ENCODE measurements at regions of chr18 and their contacts with region 1.

Region 1: GRCh38 chr18:41126541-41127235 is 828.3 kb upstream of the PIK3C3 start:
- DNase-seq: no peak
- ATAC-seq: no peak
- H3K4me3 ChIP-seq: no peak overlapping the region
- H3K4me3 Mint-ChIP-seq: no peak overlapping the region
- H3K27ac ChIP-seq: no peak overlapping the region
- H3K27ac Mint-ChIP-seq: no peak overlapping the region
- H3K4me1 ChIP-seq: no peaks in the 10 kb centered on the region
- H3K4me1 Mint-ChIP-seq: no peaks in the 10 kb centered on the region
- H3K27me3 ChIP-seq: no peaks in the 10 kb centered on the region
- H3K27me3 Mint-ChIP-seq: no peaks in the 10 kb centered on the region
- CTCF ChIP-seq: no peak

Region 2: GRCh38 chr18:41096504-41096903 is 30.2 kb before region 1 on chr18:
- CTCF ChIA-PET with region 1: no interaction called
- POLR2A ChIA-PET with region 1: no interaction called
- intact Hi-C with region 1: loop called in 1 of 2 experiments (anchors 5 kb)
- DNase-seq: no peak
- ATAC-seq: no peak
- H3K4me3 ChIP-seq: no peak overlapping the region
- H3K4me3 Mint-ChIP-seq: no peak overlapping the region
- H3K27ac ChIP-seq: no peak overlapping the region
- H3K27ac Mint-ChIP-seq: no peak overlapping the region
- H3K4me1 ChIP-seq: no peaks in the 10 kb centered on the region
- H3K4me1 Mint-ChIP-seq: no peaks in the 10 kb centered on the region
- H3K27me3 ChIP-seq: no peaks in the 10 kb centered on the region
- H3K27me3 Mint-ChIP-seq: no peaks in the 10 kb centered on the region
- CTCF ChIP-seq: no peak